Activated CD4-positive, alpha-beta memory T cell treated with anti-CD3 and anti-CD28 coated beads for 36 hours (primary cell): ENCODE measurements at regions of chr1 and their contacts with region 1.

Region 1: GRCh38 chr1:158998781-158999161 is 10.9 kb upstream of the IFI16 start:
- DNase-seq: peak; percentile 25
- H3K4me3 Mint-ChIP-seq: peak overlapping the region; percentile 5
- H3K27ac Mint-ChIP-seq: peak overlapping the region; percentile 52
- H3K4me1 Mint-ChIP-seq: peaks cover 43% of the 10 kb centered on the region
- H3K27me3 Mint-ChIP-seq: no peaks in the 10 kb centered on the region

Region 2: GRCh38 chr1:158506369-158506987 is 492.3 kb before region 1 on chr1:
- CTCF ChIA-PET with region 1: interaction called, 21 read pairs
- POLR2A ChIA-PET with region 1: no interaction called
- intact Hi-C with region 1: loop called (anchors 1 kb)
- DNase-seq: peak; percentile 56
- H3K4me3 Mint-ChIP-seq: no peak overlapping the region
- H3K27ac Mint-ChIP-seq: no peak overlapping the region
- H3K4me1 Mint-ChIP-seq: no peaks in the 10 kb centered on the region
- H3K27me3 Mint-ChIP-seq: peaks cover 22% of the 10 kb centered on the region

Region 3: DNA sequence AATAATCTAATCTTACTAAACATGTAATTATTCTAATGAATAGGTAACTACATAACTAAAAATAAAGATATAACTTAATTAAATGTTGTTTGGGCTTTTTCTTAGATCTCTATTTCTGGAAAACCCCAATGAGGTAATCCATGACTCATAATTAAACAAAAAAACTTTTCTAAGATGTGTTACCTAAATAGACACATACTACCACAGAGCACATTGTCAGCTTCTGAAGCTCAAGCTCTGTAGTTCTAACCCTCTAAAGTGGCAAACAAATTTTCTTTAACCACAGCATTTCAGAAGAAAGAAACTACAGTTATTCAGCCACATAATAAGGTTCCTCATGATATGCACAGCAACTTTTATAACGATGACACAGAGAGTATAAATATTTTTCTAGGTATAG is 282.4 kb before region 1 on chr1:
- CTCF ChIA-PET with region 1: no interaction called
- POLR2A ChIA-PET with region 1: no interaction called
- intact Hi-C with region 1: loop called (anchors 10 kb)
- DNase-seq: no peak
- H3K4me3 Mint-ChIP-seq: no peak overlapping the region
- H3K27ac Mint-ChIP-seq: peak overlapping the region; percentile 39
- H3K4me1 Mint-ChIP-seq: peaks cover 6% of the 10 kb centered on the region
- H3K27me3 Mint-ChIP-seq: peaks cover 25% of the 10 kb centered on the region

Region 4: DNA sequence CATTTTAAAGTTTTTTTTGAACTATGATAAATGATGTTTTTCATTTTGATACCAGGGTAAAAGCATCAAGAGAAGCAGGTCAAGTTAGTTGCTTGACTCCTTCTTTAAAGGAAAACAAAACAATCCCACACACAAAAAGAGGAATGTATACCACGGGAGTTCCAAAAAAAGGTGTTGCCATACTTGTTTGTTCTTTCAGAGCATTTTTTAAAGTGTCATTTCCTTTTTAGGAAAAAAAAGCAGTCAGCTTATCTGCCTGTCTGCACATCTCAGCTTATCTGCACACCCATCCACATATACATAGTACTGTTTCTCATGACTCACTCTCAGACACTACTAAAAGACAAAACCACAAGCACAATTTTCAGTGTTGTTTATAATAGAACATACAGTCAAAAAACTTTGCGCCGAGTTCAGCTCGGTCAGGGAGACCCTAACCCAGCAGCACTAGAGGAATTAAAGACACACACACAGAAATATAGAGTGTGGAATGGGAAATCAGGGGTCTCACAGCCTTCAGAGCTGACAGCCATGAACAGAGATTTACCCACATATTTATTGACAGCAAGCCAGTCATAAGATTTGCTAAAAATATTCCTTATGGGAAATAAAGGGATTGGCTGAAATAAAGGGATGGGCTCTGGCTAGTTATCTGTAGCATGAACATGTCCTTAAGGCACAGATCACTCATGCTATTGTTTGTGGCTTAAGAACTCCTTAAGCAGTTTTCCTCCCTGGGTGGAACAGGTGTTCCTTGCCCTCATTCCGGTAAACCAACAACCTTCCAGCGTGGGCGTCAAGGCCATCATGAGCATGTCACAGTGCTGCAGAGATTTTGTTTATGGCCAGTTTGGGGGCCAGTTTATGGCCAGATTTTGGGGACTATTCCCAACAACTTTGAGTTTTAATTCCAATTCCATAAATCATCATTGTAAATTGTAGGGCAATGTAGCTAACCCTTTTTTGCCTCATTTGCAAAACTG is 179.0 kb before region 1 on chr1:
- CTCF ChIA-PET with region 1: interaction called, 11 read pairs
- POLR2A ChIA-PET with region 1: interaction called, 3 read pairs
- intact Hi-C with region 1: loop called (anchors 1 kb)
- DNase-seq: peak; percentile 40
- H3K4me3 Mint-ChIP-seq: peak overlapping the region; percentile 46
- H3K27ac Mint-ChIP-seq: peak overlapping the region; percentile 71
- H3K4me1 Mint-ChIP-seq: peaks cover 22% of the 10 kb centered on the region
- H3K27me3 Mint-ChIP-seq: peaks cover 2% of the 10 kb centered on the region

Region 5: DNA sequence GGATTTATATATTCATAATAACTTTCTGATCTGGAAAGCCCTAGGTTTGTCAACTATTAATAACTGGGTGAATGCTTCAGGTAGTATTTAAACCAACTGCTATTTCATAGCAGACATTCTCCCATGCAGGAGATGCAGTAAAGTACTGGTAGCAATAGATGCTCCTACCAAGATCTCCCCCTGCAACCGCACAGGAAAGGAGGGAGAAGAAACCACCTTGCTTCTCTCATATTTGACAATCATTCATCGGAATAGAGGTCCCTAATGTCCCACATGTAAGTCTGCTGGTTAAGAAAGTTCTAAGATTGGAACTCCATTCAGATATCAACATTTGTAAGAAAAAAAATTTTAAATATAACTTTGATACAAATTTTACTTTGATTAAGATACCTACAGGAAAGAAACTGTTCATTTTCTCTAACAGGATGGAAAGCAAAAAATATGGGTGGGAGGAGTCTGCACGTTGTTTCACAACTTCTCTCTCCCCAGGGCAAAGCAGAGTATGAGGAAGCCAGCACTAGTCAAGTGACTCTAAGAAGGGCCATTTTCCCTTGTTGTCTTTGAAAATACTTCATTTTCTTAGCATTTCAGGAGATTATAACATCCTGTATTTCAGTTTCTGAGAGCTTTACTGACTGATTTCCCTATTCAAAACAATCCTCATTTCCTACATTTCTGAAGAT is 67.6 kb before region 1 on chr1 and contains the start of gene PYHIN1:
- CTCF ChIA-PET with region 1: no interaction called
- POLR2A ChIA-PET with region 1: no interaction called
- intact Hi-C with region 1: loop called (anchors 1 kb)
- DNase-seq: peak; percentile 46
- H3K4me3 Mint-ChIP-seq: peak within 1 kb of the TSS; percentile 83
- H3K27ac Mint-ChIP-seq: peak within 1 kb of the TSS; percentile 84
- H3K4me1 Mint-ChIP-seq: peaks cover 50% of the 10 kb centered on the region
- H3K27me3 Mint-ChIP-seq: no peaks in the 10 kb centered on the region
- total RNA-seq, gene PYHIN1: 12.2 to 13.1 TPM

Region 6: DNA sequence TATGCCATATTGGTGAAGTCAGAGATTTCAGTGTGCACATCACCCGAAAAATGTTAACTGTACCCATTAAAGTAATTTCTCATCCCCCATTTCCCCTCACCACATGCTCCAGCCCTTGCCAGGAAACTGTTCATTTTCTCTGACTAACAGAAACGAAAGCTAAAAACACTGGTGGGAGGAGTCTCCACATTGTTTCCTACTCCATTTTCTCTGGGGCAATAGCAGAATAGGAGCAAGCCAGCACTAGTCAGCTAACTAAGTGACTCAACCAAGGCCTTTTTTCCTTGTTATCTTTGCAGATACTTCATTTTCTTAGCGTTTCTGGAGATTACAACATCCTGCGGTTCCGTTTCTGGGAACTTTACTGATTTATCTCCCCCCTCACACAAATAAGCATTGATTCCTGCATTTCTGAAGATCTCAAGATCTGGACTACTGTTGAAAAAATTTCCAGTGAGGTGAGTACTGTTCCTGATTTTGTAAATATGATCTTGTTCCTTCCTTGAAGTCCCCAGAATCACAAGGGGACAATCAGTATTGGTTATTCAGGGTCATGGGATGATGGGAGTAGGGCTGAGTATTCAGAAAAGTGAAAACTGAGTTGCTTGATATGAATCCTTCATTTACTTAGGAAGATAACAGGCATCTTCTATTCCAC is 11.1 kb after region 1 on chr1 and contains the start of gene IFI16:
- CTCF ChIA-PET with region 1: interaction called, 19 read pairs
- POLR2A ChIA-PET with region 1: interaction called, 28 read pairs
- intact Hi-C with region 1: no loop called
- DNase-seq: peak; percentile 77
- H3K4me3 Mint-ChIP-seq: peak within 1 kb of the TSS; percentile 90
- H3K27ac Mint-ChIP-seq: peak within 1 kb of the TSS; percentile 100
- H3K4me1 Mint-ChIP-seq: peaks cover 51% of the 10 kb centered on the region
- H3K27me3 Mint-ChIP-seq: no peaks in the 10 kb centered on the region
- total RNA-seq, gene IFI16: 215 to 220 TPM